Sciatic nerve (tissue), 2 donors: ENCODE measurements at regions of chr4 and their contacts with region 1.

Region 1: GRCh38 chr4:89009761-89010369 is 47.1 kb downstream of the FAM13A start:
- DNase-seq: no peak
- ATAC-seq: no peak

Region 2: DNA sequence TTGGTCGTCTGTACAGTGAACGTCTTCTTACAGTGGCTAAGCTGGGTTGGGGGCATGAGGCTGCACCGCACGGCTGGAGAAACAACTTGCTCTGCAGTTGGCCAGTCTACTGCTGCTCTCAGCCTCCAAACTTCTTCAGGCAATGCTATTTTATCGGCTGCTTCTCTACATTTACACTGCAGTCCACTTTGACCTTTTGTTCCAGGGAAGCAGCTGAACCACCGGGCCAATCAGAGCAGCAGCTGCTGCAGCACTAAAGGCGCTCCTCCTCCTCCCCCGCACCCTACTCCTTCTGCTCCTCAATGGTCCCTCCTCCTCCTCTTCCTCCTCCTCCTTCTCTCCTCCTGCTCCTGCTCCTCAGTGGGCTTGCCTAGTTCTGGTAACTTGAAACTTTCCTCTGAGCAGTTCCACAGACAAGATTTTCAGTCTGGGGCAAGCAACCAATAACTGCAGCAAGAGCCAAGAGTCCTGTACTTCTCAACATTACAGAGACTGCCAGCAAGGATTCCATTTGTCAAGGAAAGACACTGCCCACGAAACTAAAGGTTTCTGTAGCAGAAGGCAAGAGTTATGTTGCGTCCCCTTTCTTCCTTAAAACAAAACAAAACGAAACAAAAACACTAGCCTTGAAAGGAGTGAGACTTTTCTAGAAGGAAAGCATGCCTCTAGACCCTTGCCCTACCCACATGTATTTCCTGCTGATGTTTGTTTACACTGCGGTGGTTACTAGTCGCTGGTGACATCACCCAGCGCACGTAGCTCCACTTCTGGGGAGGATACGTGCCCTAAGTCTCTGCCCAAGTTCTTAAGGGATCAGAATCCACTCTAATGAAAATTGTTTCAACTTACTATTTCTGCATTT is 186.6 kb before region 1 on chr4:
- intact Hi-C with region 1: loop called (anchors 10 kb)
- DNase-seq: peak; percentile 90
- ATAC-seq: peak; percentile 98